ENCODE measurements at regions of chr13 and their contacts with region 1.

Region 1: DNA sequence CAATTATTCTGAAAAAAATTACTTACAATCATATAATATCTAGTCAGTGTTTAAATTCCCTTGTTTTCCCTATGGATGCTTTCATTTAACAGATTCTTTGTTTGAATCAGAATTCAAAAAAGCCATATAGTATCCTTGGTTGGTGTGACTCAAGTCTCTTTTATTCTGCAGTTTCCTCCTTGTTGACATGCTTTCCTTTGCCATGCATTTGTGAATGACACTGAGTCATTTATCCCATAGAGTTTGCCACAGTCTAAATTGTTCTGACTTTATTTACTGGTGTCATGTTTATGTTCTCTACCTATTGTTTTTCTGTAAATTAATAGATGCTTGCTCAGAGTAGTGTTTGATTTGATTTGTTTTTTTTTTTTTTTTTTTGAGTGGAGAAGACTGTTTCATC is 893.8 kb upstream of the SLC10A2 start:
- DNase-seq: no peak
- ATAC-seq: peak in 1 of 2 donors; percentile 25
- H3K4me3 ChIP-seq: no peak overlapping the region
- H3K27ac ChIP-seq: peak overlapping the region in 1 of 4 donors; percentile 48
- H3K4me1 ChIP-seq: peaks cover 26 to 30% of the 10 kb centered on the region in 2 donors
- H3K27me3 ChIP-seq: no peaks in the 10 kb centered on the region
- CTCF ChIP-seq: no peak
- POLR2A ChIP-seq: no peak

Region 2: GRCh38 chr13:104571161-104571892 is 611.3 kb after region 1 on chr13:
- in situ Hi-C with region 1: no loop called
- intact Hi-C with region 1: loop called (anchors 5 kb)
- DNase-seq: peak; percentile 34 to 64
- ATAC-seq: peak; percentile 96
- H3K4me3 ChIP-seq: no peak overlapping the region
- H3K27ac ChIP-seq: peak overlapping the region in 2 of 4 donors; percentile 50 to 68
- H3K4me1 ChIP-seq: peaks cover 6 to 13% of the 10 kb centered on the region in 2 donors
- H3K27me3 ChIP-seq: no peaks in the 10 kb centered on the region
- CTCF ChIP-seq: peak in 4 of 5 experiments; percentile 36 to 55 (median 48)
- POLR2A ChIP-seq: no peak